Naive thymus-derived CD4-positive, alpha-beta T cell (primary cell): ENCODE measurements at regions of chr3 and their contacts with region 1.

Region 1: DNA sequence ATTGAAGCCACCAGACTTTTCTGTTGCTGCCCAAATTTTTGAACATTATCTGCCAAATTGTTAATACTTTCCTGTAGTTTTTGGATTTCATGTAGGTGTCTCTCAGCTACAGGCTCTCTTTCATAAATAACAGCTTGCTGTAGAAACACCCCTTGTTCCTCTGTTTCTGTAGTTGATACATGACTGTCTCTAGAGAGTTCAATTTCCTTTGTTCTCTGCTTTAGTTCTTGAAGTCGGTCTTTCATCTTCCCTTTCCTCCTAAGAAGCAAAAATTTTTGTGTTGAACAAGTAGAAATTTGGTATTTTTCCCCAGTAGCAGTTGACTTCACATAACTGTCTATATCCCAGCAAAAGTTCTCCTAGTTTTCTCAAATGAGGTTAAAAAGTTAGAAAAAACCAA is 13.4 kb downstream of the STX19 start:
- DNase-seq: peak in 5 of 9 donors; percentile 3 to 35 (median 25)
- ATAC-seq: no peak
- H3K4me3 ChIP-seq: no peak overlapping the region
- H3K4me3 Mint-ChIP-seq: peak overlapping the region in 2 of 10 donors; percentile 14 to 56
- H3K27ac ChIP-seq: no peak overlapping the region
- H3K27ac Mint-ChIP-seq: peak overlapping the region in 6 of 9 donors; percentile 3 to 53 (median 40)
- H3K4me1 ChIP-seq: no peaks in the 10 kb centered on the region
- H3K4me1 Mint-ChIP-seq: peaks cover 8 to 25% (median 21%) of the 10 kb centered on the region in 7 donors
- H3K27me3 ChIP-seq: no peaks in the 10 kb centered on the region
- H3K27me3 Mint-ChIP-seq: no peaks in the 10 kb centered on the region

Region 2: GRCh38 chr3:94049267-94049666 is 34.2 kb after region 1 on chr3:
- CTCF ChIA-PET with region 1: no interaction called
- POLR2A ChIA-PET with region 1: no interaction called
- intact Hi-C with region 1: loop called in 1 of 2 experiments (anchors 1 kb)
- DNase-seq: no peak
- ATAC-seq: no peak
- H3K4me3 ChIP-seq: no peak overlapping the region
- H3K4me3 Mint-ChIP-seq: no peak overlapping the region
- H3K27ac ChIP-seq: no peak overlapping the region
- H3K27ac Mint-ChIP-seq: no peak overlapping the region
- H3K4me1 ChIP-seq: no peaks in the 10 kb centered on the region
- H3K4me1 Mint-ChIP-seq: no peaks in the 10 kb centered on the region
- H3K27me3 ChIP-seq: no peaks in the 10 kb centered on the region
- H3K27me3 Mint-ChIP-seq: no peaks in the 10 kb centered on the region